ENCODE measurements at regions of chr16 and their contacts with region 1.

Region 1: DNA sequence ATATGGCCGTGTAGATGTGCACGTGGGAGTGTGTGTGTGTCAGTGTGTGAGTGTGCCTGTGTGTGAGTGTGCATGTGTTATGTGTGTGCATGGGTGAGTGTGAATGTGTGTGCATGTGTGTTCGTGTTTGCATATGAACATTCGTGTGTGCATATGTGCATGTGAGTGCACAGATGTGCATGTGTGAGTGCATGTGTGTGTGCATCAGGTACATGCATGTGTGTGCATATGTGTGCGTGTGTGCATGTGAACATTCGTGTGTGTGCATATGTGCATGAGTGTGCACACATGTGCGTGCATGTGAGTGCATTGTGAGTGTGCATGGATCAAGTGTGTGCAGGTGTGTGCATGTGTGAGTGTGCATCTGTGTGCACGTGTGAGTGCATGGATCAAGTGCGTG is 2.5 kb upstream of the TPSAB1 start:
- DNase-seq: peak; percentile 8
- ATAC-seq: no peak

Region 2: DNA sequence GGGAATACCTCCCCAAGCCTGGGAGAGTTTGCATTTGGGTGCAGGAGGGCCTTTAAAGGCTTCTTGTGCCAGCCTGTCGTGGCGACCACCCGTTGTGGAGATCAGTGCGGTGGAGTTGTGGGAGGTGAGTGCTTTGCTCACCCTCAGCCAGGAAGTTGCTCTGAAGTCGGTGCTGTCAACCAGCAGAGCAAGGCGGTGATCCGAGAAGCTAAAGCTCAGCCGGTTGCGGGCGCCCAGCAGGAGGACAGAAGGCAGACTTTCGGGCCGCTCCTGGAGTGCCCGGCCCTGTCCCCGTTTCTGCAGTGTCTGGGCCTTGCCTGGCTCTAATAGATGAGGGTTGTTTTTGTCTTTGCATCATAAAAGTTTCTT is 72.8 kb after region 1 on chr16:
- intact Hi-C with region 1: no loop called
- DNase-seq: no peak
- ATAC-seq: no peak

Region 3: GRCh38 chr16:1556254-1556653 is 318.3 kb after region 1 on chr16:
- intact Hi-C with region 1: loop called (anchors 10 kb)
- DNase-seq: no peak
- ATAC-seq: no peak

Measured in Right ventricle myocardium superior (tissue), 1 donor.